Ovary (tissue), 10 donors: ENCODE measurements at regions of chr1 and their contacts with region 1.

Region 1: DNA sequence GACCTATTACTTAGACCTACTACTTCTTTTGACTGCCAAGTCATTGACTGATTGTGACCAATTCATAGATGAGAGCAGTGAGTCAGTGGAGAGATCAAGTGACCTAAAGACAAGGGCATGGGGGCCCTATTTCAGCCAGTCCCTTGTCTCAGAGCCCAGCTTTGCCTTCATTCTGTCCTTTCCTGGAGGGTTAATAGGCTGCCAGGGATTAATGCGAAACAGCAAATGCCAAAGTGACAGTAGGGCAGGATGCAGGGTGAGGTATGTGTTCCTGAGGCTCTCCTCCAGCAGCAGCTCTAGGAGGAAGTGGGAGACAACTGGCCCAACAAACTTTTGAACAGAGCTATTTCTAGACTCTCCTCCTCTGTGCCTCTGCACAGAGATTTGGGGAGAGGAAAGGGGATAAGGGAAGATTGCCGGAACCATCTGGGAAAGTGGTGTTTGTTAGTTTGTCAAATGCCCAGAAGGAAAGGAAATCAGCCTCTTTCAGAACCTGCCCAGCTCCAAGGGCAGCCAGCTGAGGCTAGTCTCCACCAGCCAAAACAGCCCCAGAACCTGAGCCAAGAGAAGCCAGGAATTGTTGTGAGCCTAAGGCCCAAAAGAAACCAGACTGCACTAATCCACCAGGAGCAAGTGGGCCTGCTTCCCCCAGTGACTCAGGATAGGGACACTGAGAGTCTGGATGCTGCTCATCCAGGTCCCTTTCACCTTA is 4.9 kb upstream of the S100A3 start:
- DNase-seq: peak in 1 of 5 donors; percentile 44
- H3K4me3 ChIP-seq: no peak overlapping the region
- H3K27ac ChIP-seq: peak overlapping the region in 1 of 2 donors; percentile 66
- H3K4me1 ChIP-seq: peaks cover 16% of the 10 kb centered on the region
- H3K27me3 ChIP-seq: no peaks in the 10 kb centered on the region
- CTCF ChIP-seq: no peak
- EP300 ChIP-seq: no peak
- POLR2A ChIP-seq: no peak

Region 2: GRCh38 chr1:153951801-153952200 is 397.8 kb after region 1 on chr1:
- intact Hi-C with region 1: no loop called
- DNase-seq: no peak
- H3K4me3 ChIP-seq: no peak overlapping the region
- H3K27ac ChIP-seq: no peak overlapping the region
- H3K4me1 ChIP-seq: peaks cover 8% of the 10 kb centered on the region
- H3K27me3 ChIP-seq: no peaks in the 10 kb centered on the region
- CTCF ChIP-seq: no peak
- EP300 ChIP-seq: no peak
- POLR2A ChIP-seq: no peak

Region 3: DNA sequence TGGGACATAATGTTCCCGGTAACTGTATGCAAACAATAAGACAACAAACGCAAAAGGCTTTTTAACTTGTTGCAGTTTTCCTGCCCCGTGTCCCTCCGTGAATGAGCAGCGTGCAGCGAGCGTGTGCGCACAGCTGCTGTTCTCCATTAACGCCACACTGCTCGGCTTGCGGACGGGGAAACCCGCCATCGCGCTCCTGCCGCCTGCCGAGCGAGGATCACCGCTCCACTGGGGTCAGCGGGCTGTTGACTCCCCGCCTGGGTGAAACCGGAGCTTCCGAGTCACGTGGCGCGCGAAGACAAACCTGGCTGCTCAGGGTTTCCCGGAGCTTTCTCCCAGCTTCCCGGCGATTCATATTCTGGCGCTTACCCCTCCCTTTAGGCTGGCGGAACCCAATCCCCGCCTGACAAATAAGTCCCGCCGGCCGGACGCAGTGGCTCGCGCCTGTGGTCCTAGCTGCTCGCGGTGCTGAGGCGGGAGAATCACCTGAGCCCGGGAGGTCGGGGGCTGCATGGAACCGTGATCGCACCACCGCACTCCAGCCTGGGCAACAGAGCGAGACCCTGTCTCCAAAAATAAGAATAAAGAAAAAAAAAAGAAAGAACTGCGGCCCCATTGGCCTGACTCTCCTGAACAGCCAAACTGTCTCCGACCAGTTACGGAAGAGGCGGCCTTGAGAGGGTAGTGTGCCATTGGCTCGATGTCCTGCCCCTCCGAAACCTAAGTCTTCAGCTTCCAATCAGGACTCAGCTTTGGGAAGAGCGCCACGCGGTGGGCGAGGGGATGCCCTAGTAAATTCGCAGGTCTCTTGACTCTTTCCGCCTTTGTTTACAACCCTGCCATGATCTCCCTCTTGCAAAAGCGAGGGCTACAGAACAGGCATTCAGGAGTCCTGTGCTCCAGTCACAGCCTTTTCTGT is 413.4 kb after region 1 on chr1 and contains the start of gene CREB3L4:
- intact Hi-C with region 1: loop called in 1 of 4 experiments (anchors 10 kb)
- DNase-seq: peak; percentile 90 to 94 (median 93)
- H3K4me3 ChIP-seq: peak within 1 kb of the TSS; percentile 69
- H3K27ac ChIP-seq: peak within 1 kb of the TSS; percentile 78 to 90
- H3K4me1 ChIP-seq: peaks cover 11% of the 10 kb centered on the region
- H3K27me3 ChIP-seq: no peaks in the 10 kb centered on the region
- CTCF ChIP-seq: peak; percentile 31 to 48 (median 46)
- EP300 ChIP-seq: peak; percentile 74
- POLR2A ChIP-seq: peak; percentile 66
- total RNA-seq, gene CREB3L4: 10.5 to 24.9 (median 14.9) TPM